ENCODE measurements at regions of chr11 and their contacts with region 1.

Region 1: GRCh38 chr11:64924102-64924851 is at the start of gene PPP2R5B:
- DNase-seq: peak; percentile 95
- H3K4me3 Mint-ChIP-seq: peak within 1 kb of the TSS; percentile 98
- H3K27ac Mint-ChIP-seq: peak within 1 kb of the TSS; percentile 98
- H3K4me1 Mint-ChIP-seq: peaks cover 14% of the 10 kb centered on the region
- H3K27me3 Mint-ChIP-seq: no peaks in the 10 kb centered on the region
- CTCF ChIP-seq: no peak
- total RNA-seq, gene PPP2R5B: 38.0 and 48.0 TPM in 2 replicates

Region 2: DNA sequence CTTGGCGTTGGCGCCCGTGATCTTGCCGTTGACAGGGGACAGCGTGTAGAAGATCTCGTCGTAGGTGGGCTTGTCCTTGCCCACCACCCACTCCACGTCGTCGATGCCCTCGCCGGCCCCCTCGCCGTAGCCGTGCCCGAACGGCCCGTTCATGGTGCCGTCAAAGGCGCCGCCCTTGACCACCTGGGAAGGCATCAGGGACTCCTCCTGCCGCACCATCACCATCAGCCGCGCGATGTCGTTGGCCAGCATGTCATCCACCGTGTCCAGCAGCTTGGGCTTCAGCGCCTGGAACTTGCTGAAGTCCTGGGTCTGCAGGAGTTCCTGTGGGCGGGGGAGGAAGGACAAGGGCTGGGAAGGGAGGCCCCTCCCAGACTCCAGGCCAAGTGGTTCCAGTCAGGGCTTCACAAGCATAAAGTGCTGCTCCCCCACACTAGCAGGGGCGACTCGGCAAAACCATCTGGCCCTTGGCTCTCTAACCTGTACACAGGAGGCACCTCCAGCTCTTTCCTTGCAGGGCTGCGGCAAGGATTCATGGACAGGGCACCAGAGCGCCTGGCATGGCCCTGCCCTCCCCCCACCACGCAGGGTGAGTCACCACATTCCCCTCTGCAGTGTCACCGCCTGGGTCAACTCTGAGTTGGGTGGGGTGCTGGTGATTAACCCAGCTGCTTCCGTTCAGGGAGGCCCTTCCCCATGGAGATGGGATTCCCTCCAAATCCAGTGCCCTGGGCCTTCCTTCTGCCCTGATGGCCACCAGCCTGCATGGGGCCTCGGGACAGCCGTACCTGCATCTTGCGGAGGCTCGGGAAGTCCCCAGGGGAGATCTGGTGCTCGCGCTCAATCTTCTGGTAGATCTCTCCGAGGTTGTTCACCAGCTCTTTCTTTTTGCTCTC is 69.5 kb before region 1 on chr11:
- CTCF ChIA-PET with region 1: no interaction called
- POLR2A ChIA-PET with region 1: no interaction called
- intact Hi-C with region 1: loop called (anchors 2 kb)
- DNase-seq: peak; percentile 97
- H3K4me3 Mint-ChIP-seq: peak overlapping the region; percentile 54
- H3K27ac Mint-ChIP-seq: peak overlapping the region; percentile 86
- H3K4me1 Mint-ChIP-seq: peaks cover 28% of the 10 kb centered on the region
- H3K27me3 Mint-ChIP-seq: no peaks in the 10 kb centered on the region
- CTCF ChIP-seq: no peak

Region 3: DNA sequence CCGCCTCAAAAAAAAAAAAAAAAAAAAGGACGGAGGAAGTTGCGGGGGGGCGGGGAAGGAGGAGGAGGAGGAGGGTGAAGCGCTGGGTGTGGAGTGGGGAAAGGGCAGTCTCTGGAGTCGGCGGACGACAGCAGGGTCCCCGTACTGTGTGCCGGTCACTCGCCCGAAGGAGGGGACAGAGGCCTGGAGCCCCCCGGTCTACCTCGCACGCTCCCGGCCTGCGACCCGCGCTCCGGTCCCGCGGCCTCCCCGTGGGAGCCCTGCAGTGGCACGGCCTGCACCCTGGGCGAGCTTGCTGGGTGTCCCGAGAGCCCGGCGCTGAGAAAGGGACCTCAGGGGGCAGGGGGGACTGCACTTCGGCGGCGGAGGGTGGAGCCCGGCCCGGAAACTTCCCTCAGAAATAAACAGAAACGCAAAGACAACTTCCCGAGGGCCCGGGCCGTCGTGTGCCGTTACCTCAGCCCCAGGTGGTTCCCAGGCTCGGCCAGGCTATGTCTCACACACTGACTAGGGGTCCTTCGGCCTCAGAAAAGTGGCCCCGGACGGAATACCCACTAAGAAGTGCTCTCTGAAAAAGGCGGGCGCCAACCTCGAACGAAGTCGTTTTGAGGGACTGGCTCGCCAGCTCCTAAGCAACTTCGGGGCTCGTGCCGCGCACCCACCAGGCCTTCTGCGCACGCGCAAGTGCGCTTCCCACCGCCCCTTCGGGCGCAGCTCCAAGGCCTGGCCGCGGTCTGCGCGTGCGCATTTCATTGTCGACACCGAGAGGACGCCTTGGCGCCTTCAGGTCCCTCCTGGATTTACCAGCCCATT is 47.4 kb after region 1 on chr11 and contains the start of gene MAJIN:
- CTCF ChIA-PET with region 1: no interaction called
- POLR2A ChIA-PET with region 1: no interaction called
- intact Hi-C with region 1: loop called (anchors 5 kb)
- DNase-seq: no peak
- H3K4me3 Mint-ChIP-seq: no peak within 1 kb of the TSS
- H3K27ac Mint-ChIP-seq: peak within 1 kb of the TSS; percentile 76
- H3K4me1 Mint-ChIP-seq: peaks cover 21% of the 10 kb centered on the region
- H3K27me3 Mint-ChIP-seq: no peaks in the 10 kb centered on the region
- CTCF ChIP-seq: no peak
- total RNA-seq, gene MAJIN: not detected in 2 replicates

Region 4: GRCh38 chr11:65003282-65003681 is 79.0 kb after region 1 on chr11:
- CTCF ChIA-PET with region 1: interaction called, 5 read pairs
- POLR2A ChIA-PET with region 1: interaction called, 5 read pairs
- intact Hi-C with region 1: loop called (anchors 2 kb)
- DNase-seq: no peak
- H3K4me3 Mint-ChIP-seq: no peak overlapping the region
- H3K27ac Mint-ChIP-seq: no peak overlapping the region
- H3K4me1 Mint-ChIP-seq: no peaks in the 10 kb centered on the region
- H3K27me3 Mint-ChIP-seq: no peaks in the 10 kb centered on the region
- CTCF ChIP-seq: no peak

Measured in MCF 10A (cell line).